Ovary (tissue), 10 donors: ENCODE measurements at regions of chr17 and their contacts with region 1.

Region 1: GRCh38 chr17:1724506-1725362 is at the start of gene WDR81:
- DNase-seq: peak; percentile 90 to 95 (median 93)
- H3K4me3 ChIP-seq: peak within 1 kb of the TSS; percentile 59
- H3K27ac ChIP-seq: peak within 1 kb of the TSS; percentile 37 to 80
- H3K4me1 ChIP-seq: peaks cover 11% of the 10 kb centered on the region
- H3K27me3 ChIP-seq: no peaks in the 10 kb centered on the region
- CTCF ChIP-seq: no peak
- EP300 ChIP-seq: no peak
- POLR2A ChIP-seq: peak; percentile 25
- total RNA-seq, gene WDR81: 26.7 to 59.4 (median 36.2) TPM

Region 2: GRCh38 chr17:1673041-1673785 is 51.5 kb before region 1 on chr17:
- intact Hi-C with region 1: no loop called
- DNase-seq: no peak
- H3K4me3 ChIP-seq: no peak overlapping the region
- H3K27ac ChIP-seq: no peak overlapping the region
- H3K4me1 ChIP-seq: no peaks in the 10 kb centered on the region
- H3K27me3 ChIP-seq: no peaks in the 10 kb centered on the region
- CTCF ChIP-seq: no peak
- EP300 ChIP-seq: no peak
- POLR2A ChIP-seq: no peak

Region 3: GRCh38 chr17:1764284-1764683 is 39.5 kb after region 1 on chr17:
- intact Hi-C with region 1: loop called in 2 of 4 experiments (anchors 5 kb)
- DNase-seq: peak; percentile 70 to 76 (median 74)
- H3K4me3 ChIP-seq: peak overlapping the region; percentile 47
- H3K27ac ChIP-seq: peak overlapping the region; percentile 82 to 92
- H3K4me1 ChIP-seq: peaks cover 16% of the 10 kb centered on the region
- H3K27me3 ChIP-seq: no peaks in the 10 kb centered on the region
- CTCF ChIP-seq: no peak
- EP300 ChIP-seq: no peak
- POLR2A ChIP-seq: no peak

Region 4: DNA sequence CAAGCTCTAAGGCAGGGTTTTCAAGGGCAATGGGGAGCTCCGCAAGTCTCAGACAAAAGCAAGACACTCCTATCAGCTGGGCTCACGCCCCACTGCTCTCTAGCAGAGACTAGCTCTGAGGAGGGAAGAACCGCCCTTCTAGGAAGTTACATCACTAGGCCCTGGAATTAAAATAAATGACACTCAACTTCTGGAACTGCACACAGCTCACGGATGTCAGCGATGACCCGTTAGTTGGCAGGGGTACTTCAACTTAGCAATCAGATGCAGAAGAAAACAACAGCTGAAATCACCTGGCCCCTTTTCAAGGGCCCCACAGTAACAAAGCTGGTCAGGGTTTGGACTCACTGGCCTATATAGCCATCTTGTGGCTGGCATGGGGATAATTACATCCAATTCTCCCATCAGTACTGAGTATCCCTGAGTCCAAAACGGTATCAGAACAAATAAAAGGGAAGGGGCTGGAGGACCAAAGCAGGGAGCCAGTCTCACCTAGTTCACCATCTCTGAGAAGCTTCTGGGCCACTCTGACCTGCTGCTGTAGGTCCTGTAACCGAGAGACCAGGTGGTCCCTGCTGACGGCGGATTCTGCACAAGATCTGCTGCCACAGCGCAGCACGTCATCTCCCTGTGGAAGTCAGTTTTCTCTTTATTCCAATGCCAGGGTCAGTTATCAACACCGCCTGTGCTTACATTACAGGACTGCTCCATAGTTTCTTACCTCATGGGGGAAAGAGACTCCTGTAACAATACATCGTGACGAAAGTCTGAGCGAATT is 59.3 kb after region 1 on chr17:
- intact Hi-C with region 1: loop called in 3 of 4 experiments (anchors 2 to 5 kb)
- DNase-seq: peak; percentile 81 to 94 (median 84)
- H3K4me3 ChIP-seq: peak overlapping the region; percentile 14
- H3K27ac ChIP-seq: peak overlapping the region; percentile 92 to 94
- H3K4me1 ChIP-seq: peaks cover 29% of the 10 kb centered on the region
- H3K27me3 ChIP-seq: no peaks in the 10 kb centered on the region
- CTCF ChIP-seq: peak; percentile 81 to 97 (median 97)
- EP300 ChIP-seq: peak; percentile 93
- POLR2A ChIP-seq: peak; percentile 68